ENCODE measurements at regions of chr1 and their contacts with region 1.

Region 1: DNA sequence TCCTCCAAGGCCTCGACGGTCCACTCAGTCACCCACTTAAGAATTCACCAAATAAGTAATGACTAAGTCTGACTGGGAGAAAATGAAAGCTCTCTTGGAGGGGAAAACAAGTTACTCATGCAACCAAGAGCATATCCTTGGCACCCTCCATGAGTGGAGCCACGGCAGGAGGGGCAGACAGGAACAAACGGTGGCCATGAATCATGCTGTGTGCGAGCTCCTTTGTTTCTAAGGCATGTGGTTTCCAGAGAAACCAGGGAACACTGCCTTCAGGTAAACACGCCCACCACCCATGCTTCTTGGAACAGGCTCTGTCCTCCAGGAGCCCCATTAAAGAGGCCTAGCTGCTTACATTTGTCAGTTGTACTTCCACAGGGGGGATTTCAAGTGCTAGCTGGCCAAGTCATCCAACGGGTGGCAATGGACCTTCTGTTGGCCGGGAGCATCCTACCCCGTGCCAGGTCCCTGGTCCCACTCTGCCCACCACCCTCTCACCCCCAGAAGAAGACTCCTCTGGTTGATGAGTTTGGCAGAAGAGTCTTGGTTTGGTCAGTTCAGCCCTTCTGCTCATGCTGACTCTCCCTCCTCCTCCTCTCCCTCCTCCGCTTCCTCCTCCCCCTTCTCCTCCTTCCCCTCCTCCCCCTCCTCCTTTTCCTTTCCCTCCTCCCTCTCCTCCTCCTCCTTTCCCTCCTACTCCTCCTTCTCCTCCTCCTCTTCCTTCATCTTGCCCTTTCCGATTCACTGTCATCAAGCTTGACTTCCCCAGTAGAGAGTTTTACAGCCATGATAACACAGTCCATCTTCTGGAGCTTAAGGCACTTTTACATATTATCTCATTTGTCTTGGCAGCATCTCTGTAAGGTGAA is 107.6 kb downstream of the CCDC185 start:
- DNase-seq: peak; percentile 63
- H3K4me3 Mint-ChIP-seq: no peak overlapping the region
- H3K27ac Mint-ChIP-seq: no peak overlapping the region
- H3K4me1 Mint-ChIP-seq: no peaks in the 10 kb centered on the region
- H3K27me3 Mint-ChIP-seq: peaks cover 7% of the 10 kb centered on the region
- CTCF ChIP-seq: no peak

Region 2: GRCh38 chr1:223394242-223394641 is 106.6 kb before region 1 on chr1:
- CTCF ChIA-PET with region 1: interaction called, 10 read pairs
- intact Hi-C with region 1: no loop called
- DNase-seq: no peak
- H3K4me3 Mint-ChIP-seq: peak overlapping the region; percentile 65
- H3K27ac Mint-ChIP-seq: peak overlapping the region; percentile 52
- H3K4me1 Mint-ChIP-seq: peaks cover 9% of the 10 kb centered on the region
- H3K27me3 Mint-ChIP-seq: peaks cover 61% of the 10 kb centered on the region
- CTCF ChIP-seq: no peak

Measured in Calu3 (cell line).